ENCODE measurements at regions of chr17 and their contacts with region 1.

Region 1: DNA sequence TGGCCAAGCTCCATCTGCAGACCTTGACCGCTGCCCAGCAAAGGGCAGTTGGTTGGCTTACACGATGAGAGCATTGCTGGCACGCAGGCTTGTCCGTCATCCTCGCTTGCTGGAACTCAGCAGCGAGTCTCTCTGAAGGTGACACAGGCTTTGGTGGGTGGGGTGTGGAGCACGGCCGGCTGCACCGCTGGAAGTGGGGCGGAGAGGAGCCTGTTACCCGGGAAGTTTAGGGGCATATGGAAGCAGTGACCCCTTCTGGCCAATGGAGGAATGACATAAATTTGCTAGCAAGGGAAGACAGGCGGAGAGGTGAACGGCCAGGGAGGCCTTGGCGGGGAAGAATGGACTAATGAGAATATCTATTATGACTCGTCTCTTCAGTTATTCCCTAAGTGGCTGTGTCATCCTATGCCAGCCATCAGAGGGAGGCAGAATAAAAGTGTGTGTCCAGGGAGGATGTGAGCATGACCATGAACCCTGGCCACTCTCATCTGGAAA is 65.9 kb upstream of the SDK2 start:
- DNase-seq: peak; percentile 39 to 93
- H3K4me3 ChIP-seq: no peak overlapping the region; a peak in 1 of 8 replicates
- H3K27ac ChIP-seq: no peak overlapping the region
- H3K4me1 ChIP-seq: peaks cover 0 to 4% (median 3%) of the 10 kb centered on the region in 4 experiments; a peak in 5 of 7 replicates
- H3K27me3 ChIP-seq: peaks cover 0 to 4% (median under 1%) of the 10 kb centered on the region in 4 experiments; a peak in 3 of 7 replicates
- CTCF ChIP-seq: peak; percentile 76 to 89 (median 85)
- EP300 ChIP-seq: no peak
- POLR2A ChIP-seq: no peak
- RAD21 ChIP-seq: peak; percentile 93 to 95

Region 2: GRCh38 chr17:73429440-73430164 is 280.5 kb before region 1 on chr17:
- CTCF ChIA-PET with region 1: interaction called, 19 read pairs
- POLR2A ChIA-PET with region 1: no interaction called
- DNase-seq: peak; percentile 46 to 98
- H3K4me3 ChIP-seq: no peak overlapping the region
- H3K27ac ChIP-seq: no peak overlapping the region
- H3K4me1 ChIP-seq: peaks cover 0 to 6% (median 1%) of the 10 kb centered on the region in 4 experiments; a peak in 3 of 7 replicates
- H3K27me3 ChIP-seq: no peaks in the 10 kb centered on the region
- CTCF ChIP-seq: peak; percentile 92 to 97 (median 92)
- EP300 ChIP-seq: no peak
- POLR2A ChIP-seq: no peak
- RAD21 ChIP-seq: peak; percentile 96 to 98

Region 3: GRCh38 chr17:73657473-73658116 is 52.5 kb before region 1 on chr17:
- CTCF ChIA-PET with region 1: interaction called, 175 read pairs
- POLR2A ChIA-PET with region 1: interaction called, 4 read pairs
- DNase-seq: peak in 1 of 2 experiments; percentile 89
- H3K4me3 ChIP-seq: no peak overlapping the region
- H3K27ac ChIP-seq: no peak overlapping the region
- H3K4me1 ChIP-seq: no peaks in the 10 kb centered on the region; a peak in 2 of 7 replicates
- H3K27me3 ChIP-seq: no peaks in the 10 kb centered on the region
- CTCF ChIP-seq: peak; percentile 83 to 89 (median 87)
- EP300 ChIP-seq: no peak
- POLR2A ChIP-seq: no peak
- RAD21 ChIP-seq: peak; percentile 70 to 80

Region 4: DNA sequence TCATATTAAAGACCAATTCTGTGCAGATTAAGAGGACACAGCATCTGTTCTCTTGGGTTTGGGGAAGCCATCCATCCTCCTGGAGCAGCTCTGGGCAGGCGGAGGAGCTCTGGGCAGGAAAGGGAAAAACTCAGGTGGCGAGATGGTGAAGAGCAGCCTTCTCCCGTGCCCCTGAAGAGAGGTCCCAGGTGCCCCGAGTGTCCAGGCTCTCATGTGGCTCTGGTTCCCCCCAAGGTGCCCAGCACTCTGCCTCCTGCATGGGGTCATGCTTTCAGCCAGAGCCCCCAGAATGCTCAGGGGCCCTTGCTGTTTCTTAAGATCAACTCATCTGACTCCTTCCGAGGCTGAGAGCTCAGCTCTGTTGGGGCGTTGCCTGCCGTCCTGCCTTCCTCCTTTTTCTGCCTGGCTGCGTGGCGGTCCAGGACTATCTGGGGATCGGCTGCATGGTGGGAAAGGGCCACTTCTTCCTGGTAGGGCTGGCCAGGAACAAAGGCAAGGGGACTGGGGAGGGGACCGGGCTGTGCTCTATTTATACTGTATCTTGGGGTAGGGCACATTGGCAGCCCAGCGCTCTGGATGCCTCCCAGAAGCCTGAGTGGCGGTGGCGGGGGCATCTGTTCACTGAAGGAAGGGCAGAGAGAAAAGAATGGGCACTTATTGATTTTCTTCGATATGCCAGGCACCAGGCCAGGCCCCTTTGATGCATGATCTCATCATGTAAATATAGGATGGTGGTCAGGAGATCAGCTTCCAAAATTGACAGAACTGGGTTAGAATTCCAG is 37.3 kb after region 1 on chr17:
- CTCF ChIA-PET with region 1: interaction called, 10 read pairs
- POLR2A ChIA-PET with region 1: no interaction called
- DNase-seq: no peak
- H3K4me3 ChIP-seq: no peak overlapping the region
- H3K27ac ChIP-seq: no peak overlapping the region
- H3K4me1 ChIP-seq: peaks cover 0 to 3% (median 0%) of the 10 kb centered on the region in 4 experiments; a peak in 1 of 7 replicates
- H3K27me3 ChIP-seq: no peaks in the 10 kb centered on the region
- CTCF ChIP-seq: no peak
- EP300 ChIP-seq: no peak
- POLR2A ChIP-seq: no peak
- RAD21 ChIP-seq: no peak

Region 5: DNA sequence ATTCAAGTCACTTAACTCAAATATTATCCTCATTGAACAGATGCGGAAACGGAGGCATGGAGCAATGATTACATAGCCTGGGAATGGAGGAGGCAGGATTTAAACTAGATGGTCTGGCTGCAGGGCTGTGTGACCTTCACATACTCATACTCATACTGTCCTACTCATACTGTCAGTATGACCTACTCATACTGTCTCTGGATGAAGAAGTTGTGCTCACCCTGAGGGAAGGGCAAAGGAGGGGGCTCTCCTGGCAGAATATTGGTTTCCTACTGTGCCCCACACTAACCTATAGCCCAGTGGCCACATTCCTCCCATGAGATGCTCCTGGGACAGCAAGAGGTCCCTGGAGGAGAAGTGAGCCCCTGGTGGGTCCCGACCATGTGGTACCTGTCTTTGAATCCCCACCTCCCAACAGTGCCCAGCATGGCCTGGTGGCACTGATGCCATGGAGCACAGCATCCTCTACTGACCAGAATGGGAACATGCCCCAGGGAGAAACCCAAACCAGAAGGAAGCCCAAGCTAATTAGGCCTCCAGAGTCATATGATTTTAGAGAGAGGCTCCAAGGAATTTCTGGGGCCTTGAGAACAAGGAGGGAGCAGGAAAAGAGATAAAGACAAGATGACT is 131.4 kb after region 1 on chr17:
- CTCF ChIA-PET with region 1: interaction called, 23 read pairs
- POLR2A ChIA-PET with region 1: no interaction called
- DNase-seq: peak in 1 of 2 experiments; percentile 59
- H3K4me3 ChIP-seq: no peak overlapping the region
- H3K27ac ChIP-seq: no peak overlapping the region
- H3K4me1 ChIP-seq: no peaks in the 10 kb centered on the region
- H3K27me3 ChIP-seq: no peaks in the 10 kb centered on the region
- CTCF ChIP-seq: peak; percentile 91 to 96 (median 93)
- EP300 ChIP-seq: no peak
- POLR2A ChIP-seq: no peak
- RAD21 ChIP-seq: peak; percentile 97